ENCODE measurements at regions of chr6 and their contacts with region 1.

Region 1: GRCh38 chr6:146700078-146700686 is 101.4 kb downstream of the ADGB start:
- DNase-seq: peak in 4 of 5 donors; percentile 66 to 80 (median 74)
- ATAC-seq: peak in 3 of 4 donors; percentile 65 to 69 (median 66)
- H3K4me3 ChIP-seq: no peak overlapping the region
- H3K27ac ChIP-seq: no peak overlapping the region
- H3K4me1 ChIP-seq: peaks cover 0 to 3% (median 0%) of the 10 kb centered on the region in 12 donors
- H3K27me3 ChIP-seq: no peaks in the 10 kb centered on the region
- CTCF ChIP-seq: peak; percentile 59 to 86 (median 76)
- POLR2A ChIP-seq: no peak

Region 2: GRCh38 chr6:145929037-145929633 is 771.0 kb before region 1 on chr6:
- intact Hi-C with region 1: loop called in 9 of 10 experiments (anchors 5 to 10 kb)
- DNase-seq: no peak
- ATAC-seq: no peak
- H3K4me3 ChIP-seq: no peak overlapping the region
- H3K27ac ChIP-seq: no peak overlapping the region
- H3K4me1 ChIP-seq: no peaks in the 10 kb centered on the region
- H3K27me3 ChIP-seq: no peaks in the 10 kb centered on the region
- CTCF ChIP-seq: peak; percentile 48 to 78 (median 66)
- POLR2A ChIP-seq: no peak

Region 3: DNA sequence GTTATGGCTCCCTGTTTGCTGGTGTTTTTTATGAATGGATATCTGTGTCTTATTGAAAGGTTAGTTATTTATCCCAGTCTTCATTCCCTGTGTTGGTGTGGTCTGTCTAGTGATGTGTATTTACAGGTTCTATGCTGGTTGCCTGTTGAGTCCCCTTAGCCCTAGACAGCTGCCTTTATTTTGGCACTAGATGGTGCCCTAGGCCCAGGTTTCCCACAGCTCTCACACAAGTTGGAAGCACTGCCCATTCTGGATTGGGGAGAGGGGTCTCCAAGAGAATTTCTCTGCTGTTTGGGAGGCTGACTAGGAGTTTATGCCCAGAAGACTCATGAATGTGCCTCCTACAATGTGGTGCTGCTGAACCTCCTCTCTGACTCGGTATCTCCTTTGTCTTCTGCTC is 658.9 kb before region 1 on chr6:
- intact Hi-C with region 1: loop called in 4 of 10 experiments (anchors 5 to 10 kb)
- DNase-seq: no peak
- ATAC-seq: peak in 1 of 4 donors; percentile 61
- H3K4me3 ChIP-seq: no peak overlapping the region
- H3K27ac ChIP-seq: no peak overlapping the region
- H3K4me1 ChIP-seq: no peaks in the 10 kb centered on the region
- H3K27me3 ChIP-seq: peaks cover 0 to 5% (median 0%) of the 10 kb centered on the region in 9 donors
- CTCF ChIP-seq: peak in 8 of 12 donors; percentile 12 to 44 (median 26)
- POLR2A ChIP-seq: no peak

Region 4: DNA sequence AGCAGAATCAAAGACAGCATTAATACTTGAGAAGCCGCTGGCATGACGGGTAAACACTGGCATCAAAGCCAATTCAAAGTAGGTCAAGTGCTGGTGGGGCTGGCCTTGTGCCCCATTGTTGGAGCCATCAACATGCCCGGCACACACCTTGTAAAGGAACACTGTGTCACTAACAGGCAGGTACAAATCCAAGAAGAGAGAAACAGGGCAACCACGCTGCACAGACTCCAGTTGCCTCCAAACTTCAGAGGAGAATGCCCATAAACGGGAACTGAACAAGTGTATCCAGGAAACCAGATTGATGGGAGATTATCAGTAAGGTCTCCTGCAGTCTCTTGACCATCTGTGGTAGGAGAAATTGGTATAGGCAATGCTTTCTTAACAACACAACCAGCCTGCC is 377.1 kb after region 1 on chr6:
- intact Hi-C with region 1: no loop called
- DNase-seq: peak in 1 of 5 donors; percentile 23
- ATAC-seq: peak in 3 of 4 donors; percentile 28 to 52 (median 42)
- H3K4me3 ChIP-seq: no peak overlapping the region
- H3K27ac ChIP-seq: no peak overlapping the region
- H3K4me1 ChIP-seq: no peaks in the 10 kb centered on the region
- H3K27me3 ChIP-seq: no peaks in the 10 kb centered on the region
- CTCF ChIP-seq: no peak
- POLR2A ChIP-seq: no peak